Tibial artery (tissue), 4 donors: ENCODE measurements at regions of chr17 and their contacts with region 1.

Region 1: GRCh38 chr17:4833178-4833940 is at the start of gene MINK1:
- DNase-seq: peak; percentile 82 to 93
- H3K4me3 ChIP-seq: peak within 1 kb of the TSS; percentile 83 to 90
- H3K27ac ChIP-seq: peak within 1 kb of the TSS; percentile 88 to 91
- H3K4me1 ChIP-seq: peaks cover 0 to 18% (median 11%) of the 10 kb centered on the region in 4 donors
- H3K27me3 ChIP-seq: no peaks in the 10 kb centered on the region
- CTCF ChIP-seq: peak in 1 of 2 experiments; percentile 3

Region 2: DNA sequence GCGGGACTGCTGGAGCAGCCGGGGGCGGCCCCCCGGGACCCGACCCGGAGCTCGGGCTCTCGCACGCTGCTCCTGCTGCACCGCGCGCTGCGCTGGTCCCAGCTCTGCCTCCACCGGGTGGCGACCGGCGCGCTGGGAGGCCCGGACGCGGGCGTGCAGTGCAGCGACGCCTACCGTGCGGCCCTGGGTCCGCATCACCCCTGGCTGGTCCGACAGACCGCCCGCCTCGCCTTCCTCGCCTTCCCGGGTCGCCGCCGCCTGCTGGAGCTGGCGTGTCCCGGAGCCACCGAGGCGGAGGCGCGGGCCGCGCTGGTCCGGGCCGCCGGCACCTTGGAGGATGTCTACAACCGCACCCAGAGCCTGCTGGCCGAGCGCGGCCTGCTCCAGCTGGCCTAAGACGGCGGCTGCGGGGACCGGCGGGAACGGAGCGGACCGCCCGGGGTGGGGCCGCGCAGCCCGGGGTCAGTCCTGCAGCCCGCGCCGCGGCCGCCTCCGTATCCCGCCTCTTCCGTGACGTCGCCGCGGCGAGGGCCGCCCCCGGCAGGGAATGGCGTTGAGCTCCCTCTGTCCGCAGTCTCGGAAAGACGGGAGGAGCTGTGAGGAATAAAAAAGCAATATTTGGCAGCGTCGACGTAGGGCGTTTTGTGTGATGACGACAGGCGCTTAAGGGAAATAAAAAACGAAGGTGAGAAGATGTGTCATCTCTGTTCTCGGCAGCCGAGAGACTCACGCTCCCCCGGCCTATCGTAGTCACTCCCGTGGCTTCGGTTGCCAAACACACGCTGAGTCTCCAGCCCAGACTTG is 43.3 kb before region 1 on chr17:
- intact Hi-C with region 1: loop called (anchors 5 kb)
- DNase-seq: peak; percentile 77 to 90
- H3K4me3 ChIP-seq: peak overlapping the region; percentile 66 to 73
- H3K27ac ChIP-seq: peak overlapping the region; percentile 86 to 89
- H3K4me1 ChIP-seq: peaks cover 0 to 45% (median 30%) of the 10 kb centered on the region in 4 donors
- H3K27me3 ChIP-seq: peaks cover 0 to 9% of the 10 kb centered on the region in 2 donors
- CTCF ChIP-seq: peak; percentile 79 to 81

Region 3: GRCh38 chr17:4852567-4853207 is 19.3 kb after region 1 on chr17:
- intact Hi-C with region 1: no loop called
- DNase-seq: no peak
- H3K4me3 ChIP-seq: no peak overlapping the region
- H3K27ac ChIP-seq: no peak overlapping the region
- H3K4me1 ChIP-seq: peaks cover 0 to 26% (median 1%) of the 10 kb centered on the region in 4 donors
- H3K27me3 ChIP-seq: no peaks in the 10 kb centered on the region
- CTCF ChIP-seq: no peak

Region 4: DNA sequence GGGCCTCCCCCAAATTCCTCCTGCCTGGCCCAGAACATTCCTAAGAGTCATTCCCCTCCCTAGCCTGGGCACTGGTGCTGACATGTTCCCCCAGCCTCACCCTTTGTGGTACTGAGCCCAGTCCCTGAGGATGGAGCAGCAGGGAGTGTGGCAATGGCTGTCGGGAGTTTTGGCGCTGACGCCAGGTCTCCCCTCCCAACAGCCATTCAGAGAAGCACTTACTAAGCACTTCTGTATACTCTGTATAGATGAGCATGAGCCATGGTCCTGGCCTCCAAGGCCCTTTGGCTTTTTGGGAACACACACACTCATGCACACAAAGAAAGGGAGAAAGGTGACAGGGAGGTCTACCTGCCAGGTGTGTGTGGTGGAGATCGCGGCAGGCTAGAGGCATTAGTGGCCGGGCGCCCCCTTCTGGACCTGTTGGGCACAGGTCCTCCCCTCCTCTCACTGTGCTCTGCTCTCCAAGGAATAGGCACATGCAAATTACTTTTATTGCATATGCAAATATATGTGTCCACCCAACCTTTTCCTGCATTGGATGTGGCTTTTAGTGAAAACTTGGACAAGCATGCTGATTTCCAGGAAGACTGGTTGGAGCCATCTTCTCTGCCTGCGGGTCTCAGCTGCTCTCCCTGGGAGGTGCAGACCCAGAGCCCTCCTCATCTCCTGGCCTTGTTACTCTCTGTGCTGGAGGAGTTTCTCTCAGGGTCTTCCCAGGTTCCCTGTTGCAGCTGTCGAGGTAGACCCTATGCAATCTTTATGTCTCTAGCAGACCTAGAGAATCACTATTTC is 48.6 kb after region 1 on chr17:
- intact Hi-C with region 1: loop called (anchors 10 kb)
- DNase-seq: no peak
- H3K4me3 ChIP-seq: no peak overlapping the region
- H3K27ac ChIP-seq: no peak overlapping the region
- H3K4me1 ChIP-seq: peaks cover 0 to 9% (median 0%) of the 10 kb centered on the region in 4 donors
- H3K27me3 ChIP-seq: no peaks in the 10 kb centered on the region
- CTCF ChIP-seq: peak; percentile 48 to 58

Region 5: DNA sequence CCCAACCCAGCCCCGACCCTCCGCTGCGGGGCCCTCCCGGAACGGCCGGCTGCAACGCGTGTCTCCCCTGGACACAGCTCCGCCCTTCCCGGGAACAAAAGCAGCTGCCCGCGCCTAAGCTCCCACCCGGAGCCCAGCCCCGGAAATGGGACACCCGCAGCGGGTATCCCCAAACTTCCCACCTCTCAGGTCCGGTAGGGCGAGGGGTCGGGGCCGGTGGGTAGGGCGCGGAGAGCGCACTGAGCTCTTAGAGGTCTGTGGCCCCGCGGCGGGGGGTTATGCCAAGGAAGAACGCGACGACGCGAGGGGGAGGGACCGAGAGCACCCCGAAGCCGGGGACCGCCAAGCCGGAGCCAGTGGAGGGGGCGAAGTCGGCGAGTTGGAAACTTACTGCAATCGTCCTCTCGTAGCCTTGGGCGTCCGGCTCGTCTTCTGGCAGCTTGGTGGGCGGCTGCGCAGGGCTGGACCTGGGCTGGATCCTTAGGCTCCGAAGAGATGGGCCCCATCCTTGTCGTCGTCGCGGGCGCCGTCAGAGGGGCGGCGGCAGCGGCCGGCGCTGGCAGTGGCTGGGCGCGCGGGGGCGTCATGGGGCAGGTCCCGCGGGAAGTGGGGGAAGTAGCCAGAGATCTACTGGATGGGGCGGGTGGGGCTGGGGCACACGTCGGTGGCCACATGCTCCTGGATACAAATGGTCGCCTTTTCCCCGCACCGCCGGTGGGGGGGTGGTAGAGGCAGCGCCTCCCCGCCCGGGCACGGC is 289.4 kb after region 1 on chr17:
- intact Hi-C with region 1: no loop called
- DNase-seq: peak; percentile 18 to 67
- H3K4me3 ChIP-seq: peak overlapping the region; percentile 45 to 49
- H3K27ac ChIP-seq: peak overlapping the region in 1 of 2 donors; percentile 67
- H3K4me1 ChIP-seq: peaks cover 0 to 17% (median 12%) of the 10 kb centered on the region in 4 donors
- H3K27me3 ChIP-seq: peaks cover 0 to 51% of the 10 kb centered on the region in 2 donors
- CTCF ChIP-seq: no peak